ENCODE measurements at regions of chr16 and their contacts with region 1.

Region 1: DNA sequence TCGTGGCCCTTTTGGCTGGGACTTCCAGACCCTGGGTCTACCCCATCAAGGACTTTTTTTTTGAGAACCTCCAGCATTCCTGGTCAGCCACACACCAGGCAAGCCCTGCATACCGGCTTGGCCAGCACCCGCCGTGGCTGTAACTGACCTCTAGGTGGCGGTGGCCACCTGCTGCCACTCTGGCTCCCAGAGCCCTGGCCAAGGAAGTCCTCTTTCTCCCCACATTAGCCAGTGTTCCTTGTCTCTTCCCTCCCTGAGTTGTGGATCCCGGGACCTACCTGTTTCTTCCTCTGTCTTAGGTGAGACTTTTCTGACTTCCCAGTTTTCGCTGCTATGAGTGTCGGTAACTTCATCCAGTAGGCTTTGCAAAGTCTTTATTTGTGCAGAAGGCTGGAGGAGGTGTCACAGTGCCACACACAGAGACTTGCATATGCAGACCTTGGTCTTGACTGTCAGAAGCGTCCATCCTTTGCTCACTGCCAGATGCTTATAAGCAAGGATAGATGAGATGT is 348.3 kb downstream of the CPPED1 start:
- DNase-seq: peak; percentile 53
- H3K4me3 ChIP-seq: no peak overlapping the region
- H3K27ac ChIP-seq: no peak overlapping the region
- H3K4me1 ChIP-seq: no peaks in the 10 kb centered on the region
- H3K27me3 ChIP-seq: no peaks in the 10 kb centered on the region
- CTCF ChIP-seq: peak; percentile 87 to 94
- POLR2A ChIP-seq: no peak

Region 2: DNA sequence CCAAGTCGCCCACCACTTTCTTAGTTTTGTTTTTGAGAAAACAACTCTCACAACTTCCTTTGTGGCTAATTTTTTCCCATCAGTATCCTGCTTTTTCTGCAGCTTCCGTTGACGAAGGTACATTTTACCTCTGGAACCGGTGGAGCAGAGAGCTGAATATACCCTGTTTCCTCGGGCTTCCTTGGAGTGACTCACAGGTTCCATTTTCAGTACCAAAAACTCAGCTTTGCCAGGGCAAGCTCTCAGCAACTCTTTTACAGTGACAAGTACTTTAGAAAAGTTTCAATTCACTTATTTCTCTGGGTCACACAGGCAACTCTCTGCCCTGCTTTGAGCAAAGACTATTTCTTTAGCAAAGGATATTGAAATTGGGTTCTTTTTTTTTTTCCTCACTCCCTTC is 159.9 kb before region 1 on chr16:
- CTCF ChIA-PET with region 1: no interaction called
- POLR2A ChIA-PET with region 1: no interaction called
- dilution Hi-C with region 1: no loop called
- intact Hi-C with region 1: no loop called
- DNase-seq: peak; percentile 59
- H3K4me3 ChIP-seq: no peak overlapping the region
- H3K27ac ChIP-seq: no peak overlapping the region
- H3K4me1 ChIP-seq: peaks cover 3% of the 10 kb centered on the region
- H3K27me3 ChIP-seq: no peaks in the 10 kb centered on the region
- CTCF ChIP-seq: no peak
- POLR2A ChIP-seq: no peak

Region 3: GRCh38 chr16:12340151-12340733 is 115.1 kb before region 1 on chr16:
- CTCF ChIA-PET with region 1: interaction called, 4 read pairs
- POLR2A ChIA-PET with region 1: no interaction called
- dilution Hi-C with region 1: no loop called
- intact Hi-C with region 1: loop called (anchors 5 kb)
- DNase-seq: peak; percentile 47
- H3K4me3 ChIP-seq: no peak overlapping the region
- H3K27ac ChIP-seq: no peak overlapping the region
- H3K4me1 ChIP-seq: peaks cover 17% of the 10 kb centered on the region
- H3K27me3 ChIP-seq: no peaks in the 10 kb centered on the region
- CTCF ChIP-seq: peak; percentile 45 to 46
- POLR2A ChIP-seq: no peak

Region 4: DNA sequence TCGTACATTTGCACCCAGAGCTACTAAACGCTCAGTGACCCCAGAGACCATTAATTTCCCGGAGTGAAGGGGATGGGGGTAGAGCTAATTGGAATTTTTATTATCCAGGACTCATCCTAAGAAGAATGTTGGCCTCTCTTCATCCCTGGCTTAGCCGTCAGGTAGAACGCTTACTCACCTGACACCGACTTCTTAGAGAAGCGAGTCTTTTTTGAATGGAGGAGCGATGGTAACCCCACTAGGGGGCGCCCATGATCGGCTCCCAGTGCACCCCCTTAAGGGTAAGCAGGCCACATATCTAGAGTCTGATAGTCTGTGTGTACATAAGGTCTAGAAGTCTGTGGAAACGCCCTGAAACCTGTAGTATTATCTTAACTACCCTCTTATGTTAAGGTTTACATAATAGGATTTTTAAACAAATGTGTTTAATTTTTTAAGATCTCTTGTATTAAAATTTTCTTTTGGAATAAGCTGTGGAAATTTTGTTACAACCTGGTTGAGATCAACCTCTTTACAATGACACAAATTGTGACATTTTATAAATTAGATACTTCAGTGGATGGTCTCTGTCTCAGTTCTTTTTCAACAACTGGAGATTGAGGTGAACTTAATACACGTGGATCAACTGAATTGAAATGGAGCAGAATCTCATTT is 118.5 kb after region 1 on chr16:
- CTCF ChIA-PET with region 1: interaction called, 20 read pairs
- POLR2A ChIA-PET with region 1: no interaction called
- dilution Hi-C with region 1: no loop called
- intact Hi-C with region 1: loop called (anchors 1 kb)
- DNase-seq: peak; percentile 79
- H3K4me3 ChIP-seq: no peak overlapping the region
- H3K27ac ChIP-seq: no peak overlapping the region
- H3K4me1 ChIP-seq: no peaks in the 10 kb centered on the region
- H3K27me3 ChIP-seq: no peaks in the 10 kb centered on the region
- CTCF ChIP-seq: peak; percentile 78 to 81
- POLR2A ChIP-seq: no peak

Region 5: DNA sequence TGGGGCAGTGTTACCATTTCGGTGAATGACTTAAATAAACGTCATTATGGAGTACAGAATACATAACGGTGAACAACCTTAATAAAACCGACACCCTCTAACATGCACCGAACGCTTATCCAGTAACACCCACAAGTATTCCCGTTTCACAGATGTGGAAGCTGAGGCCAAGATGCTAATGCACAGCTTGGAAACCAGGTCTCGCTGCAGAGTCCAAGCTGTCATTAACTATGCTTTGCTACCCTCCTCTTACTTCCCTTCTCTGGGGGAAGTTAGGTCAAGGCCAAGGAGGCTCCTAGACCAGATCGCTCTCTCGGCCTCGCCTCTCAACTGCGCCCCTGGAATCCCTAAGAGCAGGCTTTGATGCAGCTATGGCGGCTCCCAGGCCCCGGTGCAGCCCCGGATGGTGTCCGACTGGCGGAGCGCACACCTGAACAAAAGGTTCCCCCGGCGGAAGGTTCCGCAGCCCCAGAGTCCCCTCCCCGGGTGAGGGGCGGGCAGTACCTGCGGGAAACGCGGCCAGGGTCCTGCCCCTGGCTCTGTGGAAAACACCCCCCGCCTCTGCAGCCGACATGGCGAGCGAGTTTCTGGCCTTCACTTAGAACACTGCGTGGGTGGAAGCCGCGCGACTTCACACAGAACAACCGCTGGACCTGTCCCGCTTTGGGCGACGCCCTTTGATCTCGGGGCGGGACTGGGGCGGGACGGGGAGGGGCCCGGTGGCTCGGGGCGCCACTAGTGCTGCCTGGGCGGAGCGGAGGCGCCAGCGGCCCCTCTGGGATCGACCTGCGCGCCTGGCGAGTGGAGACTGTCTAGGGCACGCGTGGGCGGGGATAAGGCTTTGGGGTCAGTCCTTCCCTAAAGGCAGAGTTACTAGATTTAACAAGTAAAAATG is 348.1 kb after region 1 on chr16 and contains the start of gene CPPED1:
- CTCF ChIA-PET with region 1: no interaction called
- POLR2A ChIA-PET with region 1: no interaction called
- dilution Hi-C with region 1: no loop called
- intact Hi-C with region 1: loop called (anchors 5 kb)
- DNase-seq: peak; percentile 91
- H3K4me3 ChIP-seq: peak within 1 kb of the TSS; percentile 35 to 89 (median 76)
- H3K27ac ChIP-seq: peak within 1 kb of the TSS; percentile 99
- H3K4me1 ChIP-seq: peaks cover 26% of the 10 kb centered on the region
- H3K27me3 ChIP-seq: no peaks in the 10 kb centered on the region
- CTCF ChIP-seq: no peak
- POLR2A ChIP-seq: peak; percentile 55
- total RNA-seq, gene CPPED1: 55.8 and 59.3 TPM in 2 replicates

Region 6: GRCh38 chr16:13453938-13454553 is 998.7 kb after region 1 on chr16:
- CTCF ChIA-PET with region 1: no interaction called
- POLR2A ChIA-PET with region 1: no interaction called
- dilution Hi-C with region 1: no loop called
- intact Hi-C with region 1: loop called (anchors 10 kb)
- DNase-seq: no peak
- H3K4me3 ChIP-seq: no peak overlapping the region
- H3K27ac ChIP-seq: no peak overlapping the region
- H3K4me1 ChIP-seq: no peaks in the 10 kb centered on the region
- H3K27me3 ChIP-seq: no peaks in the 10 kb centered on the region
- CTCF ChIP-seq: no peak
- POLR2A ChIP-seq: no peak

Measured in endothelial cell of umbilical vein (primary cell).